ENCODE measurements at regions of chr15 and their contacts with region 1.

Region 1: DNA sequence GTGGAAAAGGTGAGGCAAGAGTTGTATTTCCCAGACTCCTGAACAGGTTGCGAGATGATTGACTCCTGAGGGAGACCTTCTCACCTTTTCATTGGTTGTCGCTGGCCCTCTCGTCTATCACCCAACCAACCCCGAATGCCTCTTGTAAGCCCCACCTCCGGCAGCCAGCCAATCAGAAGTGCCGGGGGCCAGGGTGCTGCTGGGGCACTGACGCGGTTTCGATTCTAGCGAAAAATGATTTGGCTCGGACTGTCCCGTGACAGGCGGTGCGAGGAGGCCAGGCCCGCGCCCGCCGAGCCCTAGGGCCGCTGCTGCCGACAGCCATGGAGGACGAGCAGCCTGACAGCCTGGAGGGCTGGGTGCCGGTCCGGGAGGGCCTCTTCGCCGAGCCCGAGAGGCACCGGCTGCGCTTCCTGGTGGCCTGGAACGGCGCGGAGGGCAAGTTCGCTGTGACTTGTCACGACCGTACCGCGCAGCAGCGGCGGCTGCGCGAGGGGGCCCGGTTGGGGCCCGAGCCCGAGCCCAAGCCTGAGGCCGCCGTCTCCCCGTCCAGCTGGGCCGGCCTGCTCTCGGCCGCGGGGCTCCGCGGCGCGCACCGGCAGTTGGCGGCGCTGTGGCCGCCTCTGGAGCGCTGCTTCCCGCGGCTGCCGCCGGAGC is at the start of gene WHAMM:
- DNase-seq: peak; percentile 96
- ATAC-seq: peak; percentile 95
- H3K4me3 ChIP-seq: peak within 1 kb of the TSS; percentile 66 to 74
- H3K27ac ChIP-seq: peak within 1 kb of the TSS; percentile 96
- H3K4me1 ChIP-seq: peaks cover 9 to 29% of the 10 kb centered on the region in 2 experiments; a peak in 2 of 4 replicates
- H3K27me3 ChIP-seq: no peaks in the 10 kb centered on the region
- CTCF ChIP-seq: no peak
- POLR2A ChIP-seq: peak; percentile 48
- RAD21 ChIP-seq: no peak
- total RNA-seq, gene WHAMM: 7.1 TPM

Region 2: GRCh38 chr15:82540055-82540983 is 269.2 kb before region 1 on chr15 and contains the start of gene RPS17:
- CTCF ChIA-PET with region 1: no interaction called
- POLR2A ChIA-PET with region 1: no interaction called
- RAD21 ChIA-PET with region 1: no interaction called
- intact Hi-C with region 1: loop called (anchors 5 kb)
- DNase-seq: peak; percentile 91
- ATAC-seq: peak; percentile 90
- H3K4me3 ChIP-seq: peak within 1 kb of the TSS; percentile 84 to 100
- H3K27ac ChIP-seq: peak within 1 kb of the TSS; percentile 85
- H3K4me1 ChIP-seq: peaks cover 0 to 18% of the 10 kb centered on the region in 2 experiments; a peak in 3 of 4 replicates
- H3K27me3 ChIP-seq: peaks cover 4% of the 10 kb centered on the region; the same call in 1 of the 2 replicates
- CTCF ChIP-seq: peak; percentile 85 to 97 (median 94)
- POLR2A ChIP-seq: peak; percentile 96
- RAD21 ChIP-seq: peak; percentile 39
- total RNA-seq, gene RPS17: 2,385 TPM